ENCODE measurements at regions of chr12 and their contacts with region 1.

Region 1: DNA sequence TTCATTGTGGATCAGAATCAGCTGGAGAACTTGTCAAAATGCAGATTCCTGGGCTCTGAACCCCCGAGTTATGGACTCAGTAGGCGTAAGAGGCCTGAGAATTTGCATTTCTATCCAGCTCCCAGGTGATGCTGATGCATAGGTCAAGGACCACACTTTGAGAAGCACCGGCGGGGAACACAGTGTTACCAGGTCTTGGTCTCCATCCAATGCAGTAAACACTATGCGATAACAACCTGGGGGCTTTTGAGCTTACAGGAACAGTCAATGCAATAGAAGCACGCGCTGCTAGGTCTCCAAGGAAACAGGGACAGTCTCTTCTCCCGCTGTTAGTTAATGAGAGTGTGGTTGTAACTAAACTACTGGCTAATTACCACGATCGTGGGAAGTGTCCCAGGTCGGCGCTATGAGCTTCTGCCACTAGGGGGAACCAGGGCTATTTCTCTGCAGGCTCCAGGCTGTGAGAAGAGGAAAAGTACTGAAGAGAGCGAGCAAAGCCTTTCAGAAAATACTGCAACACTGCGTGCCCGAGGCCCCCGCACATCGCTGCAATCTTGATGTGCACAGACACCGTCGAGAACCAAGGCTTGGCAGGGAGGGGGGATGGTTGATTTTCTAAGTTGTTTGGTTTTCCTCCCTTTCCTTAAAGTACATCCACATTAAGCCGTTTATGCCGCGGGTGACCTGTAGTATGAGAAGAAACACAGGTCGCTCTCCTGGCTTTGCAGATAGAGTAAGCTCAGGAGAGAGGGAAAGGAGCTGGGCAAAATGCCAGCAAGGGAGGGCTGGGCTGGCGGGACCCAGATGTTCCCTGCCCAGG is 52.0 kb upstream of the KCNA1 start:
- DNase-seq: peak; percentile 83
- H3K4me3 Mint-ChIP-seq: peak overlapping the region; percentile 40
- H3K27ac Mint-ChIP-seq: no peak overlapping the region
- H3K4me1 Mint-ChIP-seq: peaks cover 8% of the 10 kb centered on the region
- H3K27me3 Mint-ChIP-seq: peaks cover 13% of the 10 kb centered on the region

Region 2: GRCh38 chr12:4293299-4293965 is 564.2 kb before region 1 on chr12:
- CTCF ChIA-PET with region 1: no interaction called
- POLR2A ChIA-PET with region 1: no interaction called
- intact Hi-C with region 1: no loop called
- DNase-seq: peak; percentile 77
- H3K4me3 Mint-ChIP-seq: peak overlapping the region; percentile 59
- H3K27ac Mint-ChIP-seq: peak overlapping the region; percentile 92
- H3K4me1 Mint-ChIP-seq: peaks cover 81% of the 10 kb centered on the region
- H3K27me3 Mint-ChIP-seq: no peaks in the 10 kb centered on the region

Region 3: GRCh38 chr12:4679711-4680110 is 178.0 kb before region 1 on chr12:
- CTCF ChIA-PET with region 1: no interaction called
- POLR2A ChIA-PET with region 1: no interaction called
- intact Hi-C with region 1: no loop called
- DNase-seq: no peak
- H3K4me3 Mint-ChIP-seq: no peak overlapping the region
- H3K27ac Mint-ChIP-seq: no peak overlapping the region
- H3K4me1 Mint-ChIP-seq: no peaks in the 10 kb centered on the region
- H3K27me3 Mint-ChIP-seq: no peaks in the 10 kb centered on the region

Region 4: DNA sequence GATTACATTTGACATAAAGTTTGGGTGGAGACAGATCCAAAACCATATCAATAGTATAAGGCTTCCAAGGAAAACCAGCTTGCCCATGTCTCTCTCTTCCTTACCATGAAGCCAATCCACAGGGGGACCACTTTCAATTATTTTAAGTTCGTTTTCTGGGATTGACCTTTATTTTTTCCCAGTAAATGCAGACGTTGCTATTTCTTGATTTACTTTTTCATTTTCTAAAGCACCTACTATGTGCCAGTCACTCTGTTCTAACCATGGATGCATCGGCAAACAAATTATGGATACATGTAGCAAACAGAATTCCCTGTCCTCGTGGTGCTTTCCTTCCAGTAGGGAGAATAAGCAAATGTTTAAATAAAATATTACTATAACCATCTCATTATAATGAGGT is 13.8 kb before region 1 on chr12:
- CTCF ChIA-PET with region 1: interaction called, 15 read pairs
- POLR2A ChIA-PET with region 1: no interaction called
- intact Hi-C with region 1: no loop called
- DNase-seq: no peak
- H3K4me3 Mint-ChIP-seq: no peak overlapping the region
- H3K27ac Mint-ChIP-seq: no peak overlapping the region
- H3K4me1 Mint-ChIP-seq: peaks cover 7% of the 10 kb centered on the region
- H3K27me3 Mint-ChIP-seq: peaks cover 12% of the 10 kb centered on the region

Region 5: DNA sequence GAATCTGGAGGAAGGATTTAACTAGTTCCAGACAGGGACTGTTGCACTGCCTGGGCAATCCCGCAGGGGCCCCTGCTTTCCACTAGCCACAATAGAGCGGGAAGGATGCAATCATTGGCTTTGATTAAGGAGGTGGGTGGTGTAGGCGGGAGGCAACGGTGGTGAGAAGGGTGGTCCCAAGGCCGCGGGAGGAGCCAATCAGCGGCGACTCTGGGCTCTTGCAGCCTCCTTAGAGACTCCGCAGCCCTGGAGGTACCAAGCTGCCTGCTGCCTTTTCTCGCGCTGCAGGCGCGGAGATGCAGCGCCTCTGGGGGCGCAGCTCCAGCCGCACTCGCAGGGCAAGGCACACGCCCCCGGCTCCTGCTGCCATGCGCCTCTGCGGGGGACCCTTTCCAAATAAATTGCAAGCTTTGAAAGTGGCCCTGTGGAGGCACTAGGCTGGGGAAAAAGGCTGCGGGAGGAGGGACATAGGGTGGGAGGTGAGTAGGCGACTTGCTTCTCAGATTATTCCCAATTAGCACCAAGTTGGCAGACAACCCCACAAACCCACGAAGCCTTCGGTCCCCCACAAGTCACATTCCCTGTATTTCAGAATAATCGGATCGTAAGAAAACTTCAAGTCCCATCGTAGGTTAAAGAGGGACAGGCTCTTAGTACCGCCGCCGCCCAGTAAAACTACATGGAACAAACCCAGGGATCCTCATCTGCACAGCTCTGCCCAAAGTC is 51.2 kb after region 1 on chr12:
- CTCF ChIA-PET with region 1: interaction called, 11 read pairs
- POLR2A ChIA-PET with region 1: no interaction called
- intact Hi-C with region 1: loop called (anchors 5 kb)
- DNase-seq: peak; percentile 11
- H3K4me3 Mint-ChIP-seq: peak overlapping the region; percentile 36
- H3K27ac Mint-ChIP-seq: no peak overlapping the region
- H3K4me1 Mint-ChIP-seq: peaks cover 17% of the 10 kb centered on the region
- H3K27me3 Mint-ChIP-seq: peaks cover 39% of the 10 kb centered on the region

Region 6: DNA sequence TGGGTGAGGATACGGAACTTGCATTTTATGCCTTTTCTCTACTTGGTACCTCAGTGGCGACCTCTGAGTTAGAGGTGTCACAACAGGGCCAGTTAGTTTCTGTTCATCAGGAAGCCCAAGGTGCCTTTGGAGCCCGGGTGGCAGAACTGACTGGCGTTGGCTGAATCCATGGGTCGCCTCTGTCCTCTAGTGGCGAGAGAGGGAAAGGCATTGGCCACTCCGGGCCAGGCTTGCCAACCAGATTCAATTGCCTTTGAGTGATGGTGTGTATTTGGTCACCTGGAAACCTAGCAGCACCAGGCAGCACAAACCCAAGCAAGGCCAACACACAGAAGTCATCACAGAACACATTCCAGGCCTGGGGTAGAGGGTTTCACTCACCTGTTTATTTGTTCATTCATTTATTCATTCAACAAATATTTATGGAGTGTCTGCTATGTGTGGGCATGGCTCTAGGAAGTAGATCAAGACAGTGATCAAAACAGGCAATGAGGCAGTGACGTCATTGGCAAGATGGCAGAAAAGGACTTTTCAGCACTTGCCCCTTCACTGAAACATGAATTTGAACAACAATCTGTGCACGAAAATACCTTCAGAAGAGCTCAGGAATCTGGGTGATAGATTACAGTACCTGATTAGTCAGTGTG is 145.5 kb after region 1 on chr12:
- CTCF ChIA-PET with region 1: interaction called, 18 read pairs
- POLR2A ChIA-PET with region 1: no interaction called
- intact Hi-C with region 1: loop called (anchors 1 kb)
- DNase-seq: peak; percentile 64
- H3K4me3 Mint-ChIP-seq: no peak overlapping the region
- H3K27ac Mint-ChIP-seq: no peak overlapping the region
- H3K4me1 Mint-ChIP-seq: no peaks in the 10 kb centered on the region
- H3K27me3 Mint-ChIP-seq: peaks cover 7% of the 10 kb centered on the region

Region 7: DNA sequence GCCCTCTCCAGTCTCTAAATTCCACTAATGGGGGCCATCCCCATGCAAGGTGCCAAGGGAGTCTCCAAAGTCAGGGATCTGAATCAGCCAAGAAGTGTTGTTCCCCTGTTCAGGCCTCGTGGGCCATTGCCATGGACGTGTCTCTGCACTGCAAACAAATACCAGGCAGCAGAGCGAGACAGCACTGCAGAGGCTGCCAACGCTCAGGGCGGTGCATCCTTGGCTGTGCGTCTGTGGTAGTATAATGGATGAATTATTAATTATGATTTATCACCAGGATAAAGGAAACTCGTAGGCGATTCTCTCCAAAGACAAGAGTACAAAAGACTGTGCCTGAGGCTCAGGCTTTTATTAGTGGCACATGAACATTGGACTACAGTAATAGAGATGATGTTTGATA is 452.0 kb after region 1 on chr12:
- CTCF ChIA-PET with region 1: no interaction called
- POLR2A ChIA-PET with region 1: no interaction called
- intact Hi-C with region 1: no loop called
- DNase-seq: no peak
- H3K4me3 Mint-ChIP-seq: no peak overlapping the region
- H3K27ac Mint-ChIP-seq: no peak overlapping the region
- H3K4me1 Mint-ChIP-seq: no peaks in the 10 kb centered on the region
- H3K27me3 Mint-ChIP-seq: no peaks in the 10 kb centered on the region

Measured in activated CD4-positive, alpha-beta memory T cell treated with anti-CD3 and anti-CD28 coated beads for 36 hours (primary cell).